Activated CD8-positive, alpha-beta memory T cell treated with anti-CD3 and anti-CD28 coated beads, Interleukin-2, amount 10 ng/mL, durations not matched to agents 7 days and 5 days (primary cell): ENCODE measurements at regions of chr9 and their contacts with region 1.

Region 1: DNA sequence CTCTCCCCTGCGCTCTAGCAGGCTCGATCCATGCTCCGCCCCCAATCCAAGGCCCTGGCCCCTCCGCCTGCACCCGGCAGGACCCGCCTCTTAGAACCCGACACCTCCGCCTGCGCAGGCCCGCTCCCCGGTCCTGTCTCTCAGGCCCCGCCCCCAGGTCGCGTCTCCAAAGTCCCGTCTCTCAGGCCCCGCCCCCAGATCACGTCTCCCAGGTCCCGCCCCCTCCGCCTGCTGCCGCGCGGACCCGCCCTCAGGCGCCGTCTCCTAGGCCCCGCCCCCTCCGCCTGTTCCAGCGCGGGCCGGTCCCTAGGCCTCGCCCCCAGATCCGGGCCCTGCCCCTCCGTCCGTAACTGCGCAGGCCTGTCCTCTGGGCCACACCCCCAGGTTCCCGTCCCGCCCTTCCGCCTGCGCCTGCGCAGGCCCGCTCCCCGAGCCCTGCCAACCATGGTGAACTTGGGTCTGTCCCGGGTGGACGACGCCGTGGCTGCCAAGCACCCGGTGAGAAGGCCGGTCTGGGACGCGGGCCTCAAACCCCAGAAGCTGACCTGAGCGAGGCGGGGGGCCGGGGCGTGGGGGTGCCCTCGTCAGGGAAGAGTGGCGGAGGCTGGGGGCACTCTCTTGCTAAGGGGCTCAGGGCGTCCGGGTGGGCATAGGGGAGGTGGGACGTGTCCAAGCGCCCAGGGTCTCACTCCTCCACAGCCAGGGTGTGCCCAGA is at the start of gene TMEM141:
- DNase-seq: peak; percentile 100
- ATAC-seq: peak; percentile 93
- H3K4me3 Mint-ChIP-seq: peak within 1 kb of the TSS; percentile 77
- H3K27ac Mint-ChIP-seq: peak within 1 kb of the TSS; percentile 86
- H3K4me1 Mint-ChIP-seq: peaks cover 30% of the 10 kb centered on the region
- H3K27me3 Mint-ChIP-seq: peaks cover 9% of the 10 kb centered on the region
- total RNA-seq, gene TMEM141: 31.7 to 32.8 TPM

Region 2: DNA sequence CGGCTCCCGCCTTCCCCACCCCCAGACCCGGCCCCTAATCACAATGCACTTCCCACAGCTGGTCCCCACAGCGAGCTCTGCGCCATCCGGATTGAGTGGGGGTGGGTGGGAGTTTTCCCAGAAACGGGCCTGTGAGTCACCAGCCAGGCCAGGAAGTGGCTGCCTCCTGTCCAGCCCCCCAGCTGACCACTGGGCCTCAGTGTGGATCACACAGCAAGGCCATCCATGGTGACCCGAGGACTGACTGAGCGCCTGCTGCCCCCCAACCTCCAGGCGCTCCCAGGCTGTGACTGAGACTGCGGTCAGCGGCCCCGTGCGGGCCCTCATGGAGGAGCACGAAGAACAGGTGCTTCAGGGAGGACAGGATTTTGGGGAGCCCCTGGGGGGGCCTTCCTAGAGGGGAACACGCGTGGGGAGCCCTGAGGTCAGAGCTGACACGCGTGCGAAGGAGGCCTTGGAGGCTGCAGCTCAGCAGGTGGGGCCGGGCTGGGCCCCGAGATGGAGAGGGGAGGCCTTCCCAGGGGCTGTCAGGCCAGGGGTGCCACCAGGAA is 176.6 kb before region 1 on chr9:
- CTCF ChIA-PET with region 1: no interaction called
- DNase-seq: no peak
- ATAC-seq: no peak
- H3K4me3 Mint-ChIP-seq: no peak overlapping the region
- H3K27ac Mint-ChIP-seq: no peak overlapping the region
- H3K4me1 Mint-ChIP-seq: peaks cover 13% of the 10 kb centered on the region
- H3K27me3 Mint-ChIP-seq: no peaks in the 10 kb centered on the region

Region 3: GRCh38 chr9:136807281-136808074 is 16.4 kb after region 1 on chr9 and contains the start of gene RABL6:
- CTCF ChIA-PET with region 1: interaction called, 24 read pairs
- DNase-seq: peak; percentile 83
- ATAC-seq: peak; percentile 91
- H3K4me3 Mint-ChIP-seq: peak within 1 kb of the TSS; percentile 82
- H3K27ac Mint-ChIP-seq: peak within 1 kb of the TSS; percentile 79
- H3K4me1 Mint-ChIP-seq: peaks cover 42% of the 10 kb centered on the region
- H3K27me3 Mint-ChIP-seq: no peaks in the 10 kb centered on the region
- total RNA-seq, gene RABL6: 113 to 123 TPM

Region 4: DNA sequence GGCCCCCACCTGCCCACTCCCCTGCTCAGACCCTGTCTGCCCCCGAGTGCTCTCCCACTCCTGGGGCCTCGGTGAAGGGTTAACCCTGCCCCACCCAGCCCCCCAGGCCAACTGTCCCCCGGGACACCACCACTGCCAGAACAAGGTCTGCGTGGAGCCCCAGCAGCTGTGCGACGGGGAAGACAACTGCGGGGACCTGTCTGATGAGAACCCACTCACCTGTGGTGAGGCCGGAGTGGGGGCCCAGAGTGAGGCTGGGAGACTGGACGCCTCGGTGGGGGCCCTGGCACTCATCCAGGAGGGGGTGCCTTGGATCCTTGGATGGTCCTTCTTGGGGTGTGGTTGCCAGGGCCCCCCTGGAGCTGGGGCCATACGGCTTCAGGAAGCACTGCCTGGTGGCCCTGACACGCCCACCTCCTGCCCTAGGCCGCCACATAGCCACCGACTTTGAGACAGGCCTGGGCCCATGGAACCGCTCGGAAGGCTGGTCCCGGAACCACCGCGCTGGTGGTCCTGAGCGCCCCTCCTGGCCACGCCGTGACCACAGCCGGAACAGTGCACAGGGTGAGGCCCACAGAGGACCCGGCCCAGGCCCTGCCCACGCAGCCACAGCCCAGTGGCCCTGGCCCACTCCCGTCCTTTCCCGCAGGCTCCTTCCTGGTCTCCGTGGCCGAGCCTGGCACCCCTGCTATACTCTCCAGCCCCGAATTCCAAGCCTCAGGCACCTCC is 63.2 kb after region 1 on chr9:
- CTCF ChIA-PET with region 1: no interaction called
- DNase-seq: no peak
- ATAC-seq: no peak
- H3K4me3 Mint-ChIP-seq: no peak overlapping the region
- H3K27ac Mint-ChIP-seq: no peak overlapping the region
- H3K4me1 Mint-ChIP-seq: peaks cover 5% of the 10 kb centered on the region
- H3K27me3 Mint-ChIP-seq: no peaks in the 10 kb centered on the region